ENCODE measurements at regions of chrX and their contacts with region 1.

Region 1: GRCh38 chrX:53422086-53422860 is at the start of gene SMC1A:
- DNase-seq: peak; percentile 89 to 99 (median 98)
- H3K4me3 ChIP-seq: peak within 1 kb of the TSS; percentile 82
- H3K4me3 Mint-ChIP-seq: peak within 1 kb of the TSS; percentile 90 to 99 (median 94)
- H3K27ac ChIP-seq: peak within 1 kb of the TSS; percentile 98
- H3K27ac Mint-ChIP-seq: peak within 1 kb of the TSS; percentile 88 to 100 (median 99)
- H3K4me1 ChIP-seq: peaks cover 20% of the 10 kb centered on the region
- H3K4me1 Mint-ChIP-seq: peaks cover 32 to 40% (median 36%) of the 10 kb centered on the region in 3 donors
- H3K27me3 ChIP-seq: no peaks in the 10 kb centered on the region
- H3K27me3 Mint-ChIP-seq: peaks cover 0 to 1% of the 10 kb centered on the region in 2 donors
- total RNA-seq, gene SMC1A: 143 to 158 TPM

Region 2: GRCh38 chrX:53398216-53398615 is 24.1 kb before region 1 on chrX:
- CTCF ChIA-PET with region 1: no interaction called
- POLR2A ChIA-PET with region 1: no interaction called
- DNase-seq: no peak
- H3K4me3 ChIP-seq: no peak overlapping the region
- H3K4me3 Mint-ChIP-seq: no peak overlapping the region
- H3K27ac ChIP-seq: no peak overlapping the region
- H3K27ac Mint-ChIP-seq: no peak overlapping the region
- H3K4me1 ChIP-seq: no peaks in the 10 kb centered on the region
- H3K4me1 Mint-ChIP-seq: no peaks in the 10 kb centered on the region
- H3K27me3 ChIP-seq: no peaks in the 10 kb centered on the region
- H3K27me3 Mint-ChIP-seq: no peaks in the 10 kb centered on the region

Region 3: DNA sequence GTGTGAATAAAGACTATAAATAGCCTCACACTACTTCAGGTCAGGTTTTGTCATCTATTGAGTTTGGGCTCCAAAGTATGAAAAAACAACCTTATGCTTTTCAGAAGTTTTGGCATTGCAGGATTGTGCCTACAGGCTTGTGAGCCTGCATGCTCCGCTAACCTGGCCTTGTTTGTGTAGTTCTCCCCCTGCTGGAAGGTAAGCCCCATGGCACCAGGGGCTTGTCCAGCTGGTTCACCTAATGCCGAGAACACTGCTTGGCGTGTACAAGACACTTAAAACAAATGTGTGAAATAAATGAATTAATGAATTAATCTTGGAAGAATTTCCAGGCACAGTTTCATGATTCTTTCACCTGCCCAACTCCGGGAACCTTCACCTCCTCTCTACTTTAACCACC is 13.7 kb after region 1 on chrX:
- CTCF ChIA-PET with region 1: interaction called, 13 read pairs
- POLR2A ChIA-PET with region 1: no interaction called
- DNase-seq: peak; percentile 37 to 71 (median 67)
- H3K4me3 ChIP-seq: no peak overlapping the region
- H3K4me3 Mint-ChIP-seq: peak overlapping the region in 2 of 7 donors; percentile 26 to 32
- H3K27ac ChIP-seq: no peak overlapping the region
- H3K27ac Mint-ChIP-seq: peak overlapping the region in 2 of 8 donors; percentile 23 to 29
- H3K4me1 ChIP-seq: peaks cover 14% of the 10 kb centered on the region
- H3K4me1 Mint-ChIP-seq: peaks cover 19 to 21% (median 19%) of the 10 kb centered on the region in 3 donors
- H3K27me3 ChIP-seq: no peaks in the 10 kb centered on the region
- H3K27me3 Mint-ChIP-seq: peaks cover 0 to 11% of the 10 kb centered on the region in 2 donors

Measured in CD8-positive, alpha-beta memory T cell (primary cell).